OCI-LY7 (cell line): ENCODE measurements at regions of chr7 and their contacts with region 1.

Region 1: GRCh38 chr7:91264046-91264923 is at the start of gene FZD1:
- DNase-seq: peak; percentile 94
- H3K4me3 ChIP-seq: peak within 1 kb of the TSS; percentile 77
- H3K27ac ChIP-seq: no peak within 1 kb of the TSS
- H3K4me1 ChIP-seq: peaks cover 12% of the 10 kb centered on the region
- CTCF ChIP-seq: no peak
- total RNA-seq, gene FZD1: 1.4 and 2.4 TPM in 2 replicates

Region 2: GRCh38 chr7:91089382-91089963 is 174.8 kb before region 1 on chr7:
- CTCF ChIA-PET with region 1: no interaction called
- POLR2A ChIA-PET with region 1: interaction called, 4 read pairs
- intact Hi-C with region 1: loop called (anchors 2 kb)
- DNase-seq: peak; percentile 45
- H3K4me3 ChIP-seq: no peak overlapping the region
- H3K27ac ChIP-seq: no peak overlapping the region
- H3K4me1 ChIP-seq: peaks cover 10% of the 10 kb centered on the region
- CTCF ChIP-seq: peak; percentile 96

Region 3: GRCh38 chr7:91280185-91280584 is 15.9 kb after region 1 on chr7:
- CTCF ChIA-PET with region 1: no interaction called
- POLR2A ChIA-PET with region 1: no interaction called
- intact Hi-C with region 1: no loop called
- DNase-seq: no peak
- H3K4me3 ChIP-seq: no peak overlapping the region
- H3K27ac ChIP-seq: no peak overlapping the region
- H3K4me1 ChIP-seq: no peaks in the 10 kb centered on the region
- CTCF ChIP-seq: no peak